Activated naive CD4-positive, alpha-beta T cell treated with anti-CD3 and anti-CD28 coated beads for 36 hours (primary cell): ENCODE measurements at regions of chr22 and their contacts with region 1.

Region 1: GRCh38 chr22:50525390-50526068 is at the start of gene SCO2:
- DNase-seq: peak; percentile 98
- H3K4me3 Mint-ChIP-seq: peak within 1 kb of the TSS; percentile 97
- H3K27ac Mint-ChIP-seq: peak within 1 kb of the TSS; percentile 93
- H3K4me1 Mint-ChIP-seq: peaks cover 35% of the 10 kb centered on the region
- H3K27me3 Mint-ChIP-seq: no peaks in the 10 kb centered on the region
- total RNA-seq, gene SCO2: 1.1 to 2.1 TPM

Region 2: DNA sequence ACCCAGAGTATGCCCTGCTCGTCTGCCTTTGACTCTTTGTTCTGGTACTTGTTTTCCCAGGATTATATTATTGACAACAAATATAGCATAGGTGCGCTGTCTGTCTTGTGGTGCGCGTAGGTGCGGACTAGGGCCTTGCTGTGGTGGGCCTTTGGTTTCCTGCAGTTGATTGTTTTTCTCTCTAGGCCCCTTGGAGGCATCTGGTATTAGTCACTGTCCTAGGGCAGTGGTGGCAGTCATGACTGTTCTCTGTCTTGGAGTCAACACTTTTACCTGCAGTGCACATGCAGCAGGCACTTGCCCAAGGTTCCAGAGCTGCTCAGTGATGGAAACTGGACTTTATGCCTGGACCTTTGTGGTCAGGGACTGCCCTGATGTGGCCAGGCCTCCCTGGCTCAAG is 163.8 kb before region 1 on chr22:
- CTCF ChIA-PET with region 1: no interaction called
- intact Hi-C with region 1: no loop called
- DNase-seq: no peak
- H3K4me3 Mint-ChIP-seq: no peak overlapping the region
- H3K27ac Mint-ChIP-seq: no peak overlapping the region
- H3K4me1 Mint-ChIP-seq: peaks cover 43% of the 10 kb centered on the region
- H3K27me3 Mint-ChIP-seq: no peaks in the 10 kb centered on the region

Region 3: GRCh38 chr22:50469377-50470305 is 55.9 kb before region 1 on chr22:
- CTCF ChIA-PET with region 1: interaction called, 11 read pairs
- intact Hi-C with region 1: no loop called
- DNase-seq: peak; percentile 97
- H3K4me3 Mint-ChIP-seq: peak overlapping the region; percentile 56
- H3K27ac Mint-ChIP-seq: peak overlapping the region; percentile 89
- H3K4me1 Mint-ChIP-seq: peaks cover 58% of the 10 kb centered on the region
- H3K27me3 Mint-ChIP-seq: no peaks in the 10 kb centered on the region

Region 4: DNA sequence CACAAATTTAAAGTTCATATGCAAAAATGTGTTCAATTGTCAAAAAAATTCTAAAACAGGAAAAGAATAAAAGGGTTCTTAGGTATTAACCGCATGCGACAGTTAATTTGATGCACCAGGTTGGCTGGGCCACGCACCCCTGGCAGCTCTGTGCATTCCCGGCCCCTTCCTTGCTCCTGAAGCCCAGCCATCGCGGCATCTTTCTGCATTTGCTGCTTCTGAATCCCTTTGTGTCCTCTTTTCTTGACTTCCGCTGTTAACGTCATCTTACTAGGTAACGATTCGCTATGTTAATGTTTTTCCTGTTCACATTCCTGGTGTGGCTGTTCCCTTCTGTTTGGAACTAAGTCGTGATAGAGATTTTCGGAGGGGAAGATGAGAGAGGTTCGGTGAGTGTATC is 12.2 kb after region 1 on chr22:
- CTCF ChIA-PET with region 1: interaction called, 39 read pairs
- intact Hi-C with region 1: loop called (anchors 2 kb)
- DNase-seq: no peak
- H3K4me3 Mint-ChIP-seq: no peak overlapping the region
- H3K27ac Mint-ChIP-seq: peak overlapping the region; percentile 98
- H3K4me1 Mint-ChIP-seq: peaks cover 77% of the 10 kb centered on the region
- H3K27me3 Mint-ChIP-seq: no peaks in the 10 kb centered on the region

Region 5: DNA sequence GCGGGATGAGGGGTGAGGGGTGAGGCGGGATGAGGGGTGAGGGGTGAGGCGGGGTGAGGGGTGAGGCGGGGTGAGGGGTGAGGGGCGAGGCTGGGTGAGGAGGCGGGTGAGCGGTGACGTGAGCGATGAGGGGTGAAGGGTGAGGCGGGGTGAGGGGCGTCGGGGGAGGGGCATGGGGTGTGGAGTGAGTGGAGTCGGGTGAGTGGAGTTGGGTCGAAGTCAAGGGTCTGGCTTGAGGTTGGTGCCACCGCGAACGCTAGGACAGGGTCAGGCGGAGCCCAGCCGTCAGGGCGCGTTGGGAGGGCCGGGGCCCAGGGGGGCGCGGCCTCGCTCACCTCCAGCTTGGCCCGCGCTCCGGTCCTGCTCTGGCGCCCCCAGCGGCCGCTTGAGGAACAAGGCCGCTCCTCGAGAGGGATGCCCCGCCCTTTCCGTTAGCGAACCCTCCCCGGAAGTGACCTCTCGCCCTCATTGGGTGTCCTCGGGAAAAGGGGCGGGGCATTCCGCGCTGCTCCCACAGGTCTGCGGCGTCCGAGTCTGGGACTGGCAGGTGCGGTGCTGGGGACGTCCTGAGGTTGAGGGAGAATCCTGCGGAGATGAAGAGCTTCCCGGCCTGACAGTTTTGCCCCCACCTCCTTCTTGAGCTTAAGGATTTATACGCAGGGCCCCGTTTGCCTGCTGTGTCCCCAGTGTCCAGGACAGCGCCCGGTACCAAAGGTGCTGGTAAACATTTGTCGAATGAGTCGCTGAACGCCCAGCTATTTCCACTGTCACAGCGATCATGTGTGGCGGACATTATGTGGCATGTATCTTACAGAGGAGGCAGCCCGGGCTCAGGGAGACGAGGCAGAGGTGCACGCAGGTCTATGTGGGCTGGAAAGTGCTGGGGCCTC is 37.2 kb after region 1 on chr22 and contains the start of gene SYCE3:
- CTCF ChIA-PET with region 1: interaction called, 15 read pairs
- intact Hi-C with region 1: loop called (anchors 1 kb)
- DNase-seq: peak; percentile 98
- H3K4me3 Mint-ChIP-seq: peak within 1 kb of the TSS; percentile 85
- H3K27ac Mint-ChIP-seq: no peak within 1 kb of the TSS
- H3K4me1 Mint-ChIP-seq: peaks cover 13% of the 10 kb centered on the region
- H3K27me3 Mint-ChIP-seq: no peaks in the 10 kb centered on the region
- total RNA-seq, gene SYCE3: 0.91 to 2.0 TPM

Region 6: DNA sequence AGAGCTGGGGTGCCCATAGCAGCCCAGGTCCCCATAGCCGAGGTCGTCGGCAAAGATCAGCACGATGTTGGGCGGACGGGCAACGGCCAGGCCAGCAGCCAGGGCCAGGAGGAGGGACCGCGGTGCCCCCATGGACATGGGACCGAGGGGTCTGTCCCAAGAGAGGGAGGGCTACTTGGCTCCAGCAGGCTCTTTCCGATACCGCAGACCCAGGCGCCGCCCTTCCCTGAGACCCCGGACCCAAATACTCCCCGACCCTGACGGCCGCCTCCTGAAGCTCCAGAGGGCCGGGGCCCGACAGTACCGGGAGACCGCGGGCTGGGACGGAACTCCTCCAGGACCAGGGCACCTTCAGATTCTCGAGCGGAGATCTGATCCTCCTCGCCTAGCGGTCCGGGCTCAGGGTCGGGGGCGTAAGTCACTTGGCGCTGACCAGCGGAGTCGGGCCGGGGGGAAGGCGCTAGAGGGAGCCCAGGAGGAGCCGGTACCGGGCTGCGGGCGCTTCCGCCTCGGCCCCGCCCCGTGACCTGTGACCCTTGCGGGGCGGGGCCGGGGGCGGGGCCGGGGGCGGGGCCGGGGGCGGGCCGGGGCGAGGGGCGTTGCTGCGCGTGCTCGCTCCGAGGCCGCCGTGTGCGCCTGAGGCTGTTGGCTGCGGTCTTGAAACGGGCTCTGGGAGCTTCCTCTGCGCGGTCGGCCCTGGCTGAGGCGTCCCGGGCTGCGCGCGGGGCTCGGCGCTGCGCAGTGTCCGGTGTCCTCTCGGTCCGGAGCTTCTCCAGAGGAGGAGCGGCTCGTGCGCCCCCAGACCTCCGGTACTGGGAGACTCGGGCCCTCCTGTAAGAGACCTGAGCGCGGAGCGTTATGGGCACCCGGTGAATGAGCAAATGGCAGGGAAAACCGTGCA is 102.4 kb after region 1 on chr22 and contains the start of gene ARSA:
- CTCF ChIA-PET with region 1: interaction called, 3 read pairs
- intact Hi-C with region 1: loop called (anchors 1 kb)
- DNase-seq: peak; percentile 81
- H3K4me3 Mint-ChIP-seq: peak within 1 kb of the TSS; percentile 84
- H3K27ac Mint-ChIP-seq: peak within 1 kb of the TSS; percentile 56
- H3K4me1 Mint-ChIP-seq: peaks cover 17% of the 10 kb centered on the region
- H3K27me3 Mint-ChIP-seq: no peaks in the 10 kb centered on the region
- total RNA-seq, gene ARSA: 17.8 to 19.2 TPM